GM12878 (cell line): ENCODE measurements at regions of chr4 and their contacts with region 1.

Region 1: GRCh38 chr4:122577808-122578781 is 42.8 kb downstream of the IL21 start:
- DNase-seq: no peak
- ATAC-seq: peak; percentile 97
- H3K4me3 ChIP-seq: no peak overlapping the region
- H3K27ac ChIP-seq: no peak overlapping the region
- H3K4me1 ChIP-seq: peaks cover 7% of the 10 kb centered on the region
- H3K27me3 ChIP-seq: 0 out of 4 replicates have a peak, but pooled peaks cover 0 to 2% of the 10 kb centered on the region in 2 experiments
- CTCF ChIP-seq: peak; percentile 66 to 85 (median 85)
- EP300 ChIP-seq: no peak
- POLR2A ChIP-seq: no peak
- RAD21 ChIP-seq: peak; percentile 69

Region 2: DNA sequence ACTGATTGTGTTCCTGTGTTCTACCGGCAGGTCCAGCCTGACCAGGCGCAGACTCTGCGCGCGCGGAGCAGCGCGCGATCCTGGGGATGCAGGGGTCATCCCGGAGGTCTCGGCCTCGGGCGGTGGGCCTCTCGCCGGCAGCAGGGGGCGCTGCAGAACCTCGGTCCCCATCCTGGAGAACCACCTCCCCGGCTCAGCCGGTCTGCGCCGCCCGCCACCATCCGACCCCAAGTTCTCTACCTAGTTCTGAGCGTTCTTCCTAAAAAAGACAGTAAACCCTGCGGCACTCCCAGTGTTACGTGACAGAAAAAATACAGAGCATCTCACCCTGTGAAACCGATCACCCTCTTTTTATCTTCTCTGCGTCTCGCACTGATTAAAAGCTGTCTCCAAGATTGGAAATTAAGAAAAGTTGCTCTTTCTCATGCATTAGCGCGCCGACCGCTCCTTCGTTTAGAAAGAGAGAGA is 627.8 kb before region 1 on chr4:
- CTCF ChIA-PET with region 1: interaction called, 12 read pairs
- POLR2A ChIA-PET with region 1: no interaction called
- RAD21 ChIA-PET with region 1: interaction called, 4 read pairs
- SMC1A ChIA-PET with region 1: interaction called, 4 read pairs
- in situ Hi-C with region 1: no loop called
- intact Hi-C with region 1: loop called (anchors 5 kb)
- DNase-seq: no peak
- ATAC-seq: peak; percentile 92
- H3K4me3 ChIP-seq: peak overlapping the region; percentile 63
- H3K27ac ChIP-seq: no peak overlapping the region
- H3K4me1 ChIP-seq: peaks cover 4% of the 10 kb centered on the region
- H3K27me3 ChIP-seq: peaks cover 2 to 22% of the 10 kb centered on the region in 2 experiments
- CTCF ChIP-seq: peak; percentile 47 to 71 (median 67)
- EP300 ChIP-seq: no peak
- POLR2A ChIP-seq: no peak
- RAD21 ChIP-seq: peak; percentile 56

Region 3: DNA sequence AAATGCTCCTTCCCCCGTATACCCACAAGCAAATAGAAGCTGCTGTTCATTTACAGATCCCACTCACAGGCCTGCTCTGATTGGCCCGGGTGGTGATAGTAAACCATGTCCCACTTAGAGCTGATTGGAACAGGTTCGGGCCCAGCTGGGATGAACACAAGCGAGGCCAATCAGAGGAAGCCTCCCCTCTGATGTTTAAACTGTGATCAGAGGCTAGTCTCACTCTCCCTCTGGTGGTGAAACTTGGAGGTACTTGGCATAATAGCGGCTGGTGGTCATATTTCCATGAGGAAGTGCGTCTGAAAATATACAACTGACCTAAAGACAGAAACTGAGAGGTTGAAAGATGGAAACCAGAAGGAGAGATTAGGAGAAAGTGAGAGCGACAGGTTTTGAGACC is 574.8 kb before region 1 on chr4:
- CTCF ChIA-PET with region 1: interaction called, 4 read pairs
- POLR2A ChIA-PET with region 1: no interaction called
- RAD21 ChIA-PET with region 1: no interaction called
- SMC1A ChIA-PET with region 1: no interaction called
- in situ Hi-C with region 1: no loop called
- intact Hi-C with region 1: loop called (anchors 5 kb)
- DNase-seq: peak; percentile 11
- ATAC-seq: peak; percentile 97
- H3K4me3 ChIP-seq: no peak overlapping the region
- H3K27ac ChIP-seq: no peak overlapping the region
- H3K4me1 ChIP-seq: no peaks in the 10 kb centered on the region
- H3K27me3 ChIP-seq: no peaks in the 10 kb centered on the region
- CTCF ChIP-seq: peak; percentile 58 to 66 (median 58)
- EP300 ChIP-seq: no peak
- POLR2A ChIP-seq: no peak
- RAD21 ChIP-seq: peak; percentile 81

Region 4: GRCh38 chr4:122309988-122310626 is 268.0 kb before region 1 on chr4:
- CTCF ChIA-PET with region 1: interaction called, 10 read pairs
- POLR2A ChIA-PET with region 1: no interaction called
- RAD21 ChIA-PET with region 1: interaction called, 3 read pairs
- SMC1A ChIA-PET with region 1: interaction called, 8 read pairs
- in situ Hi-C with region 1: loop called (anchors 10 kb)
- intact Hi-C with region 1: loop called (anchors 1 kb)
- DNase-seq: no peak
- ATAC-seq: no peak
- H3K4me3 ChIP-seq: no peak overlapping the region
- H3K27ac ChIP-seq: no peak overlapping the region
- H3K4me1 ChIP-seq: no peaks in the 10 kb centered on the region
- H3K27me3 ChIP-seq: no peaks in the 10 kb centered on the region
- CTCF ChIP-seq: peak in 2 of 3 experiments; percentile 16 to 34; a peak in 4 of 6 replicates
- EP300 ChIP-seq: no peak
- POLR2A ChIP-seq: no peak
- RAD21 ChIP-seq: peak; percentile 31; the same call in 1 of the 2 replicates

Region 5: GRCh38 chr4:122412547-122412946 is 165.5 kb before region 1 on chr4:
- CTCF ChIA-PET with region 1: interaction called, 3 read pairs
- POLR2A ChIA-PET with region 1: no interaction called
- RAD21 ChIA-PET with region 1: no interaction called
- SMC1A ChIA-PET with region 1: no interaction called
- in situ Hi-C with region 1: no loop called
- intact Hi-C with region 1: loop called (anchors 10 kb)
- DNase-seq: no peak
- ATAC-seq: peak; percentile 45; the same call in 2 of the 3 replicates
- H3K4me3 ChIP-seq: no peak overlapping the region
- H3K27ac ChIP-seq: no peak overlapping the region
- H3K4me1 ChIP-seq: no peaks in the 10 kb centered on the region
- H3K27me3 ChIP-seq: no peaks in the 10 kb centered on the region
- CTCF ChIP-seq: no peak
- EP300 ChIP-seq: no peak
- POLR2A ChIP-seq: no peak
- RAD21 ChIP-seq: no peak

Region 6: DNA sequence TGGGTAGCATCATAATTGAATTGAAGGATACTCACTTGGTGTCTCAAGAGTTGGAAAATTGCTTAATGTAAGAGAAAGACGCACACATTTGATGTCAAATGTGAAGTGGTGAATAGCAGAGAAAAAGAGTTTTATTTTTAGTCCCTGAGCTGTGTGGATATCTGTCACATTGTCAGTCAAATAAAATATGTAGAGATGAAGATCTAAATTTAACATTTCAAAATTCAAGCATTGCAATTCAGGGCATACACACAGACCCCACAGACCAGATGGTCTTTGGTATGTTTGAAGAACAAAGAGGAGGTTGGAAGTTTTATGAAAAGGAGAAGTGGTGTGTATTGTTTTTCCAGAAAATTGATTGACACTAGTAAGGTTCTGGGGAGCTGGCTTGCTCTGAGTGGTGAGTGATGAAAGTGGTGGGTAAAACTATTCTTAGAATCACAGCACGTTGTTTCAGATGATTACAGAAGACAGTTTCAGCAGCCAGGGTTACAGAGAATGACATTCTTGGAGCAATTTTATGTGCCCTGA is 109.5 kb after region 1 on chr4:
- CTCF ChIA-PET with region 1: no interaction called
- POLR2A ChIA-PET with region 1: no interaction called
- RAD21 ChIA-PET with region 1: no interaction called
- SMC1A ChIA-PET with region 1: no interaction called
- in situ Hi-C with region 1: no loop called
- intact Hi-C with region 1: no loop called
- DNase-seq: no peak
- ATAC-seq: peak; percentile 62
- H3K4me3 ChIP-seq: 0 out of 2 replicates have a peak overlapping the region, but pooled peaks have one; percentile 23
- H3K27ac ChIP-seq: peak overlapping the region; percentile 50
- H3K4me1 ChIP-seq: peaks cover 30% of the 10 kb centered on the region
- H3K27me3 ChIP-seq: no peaks in the 10 kb centered on the region
- CTCF ChIP-seq: no peak
- EP300 ChIP-seq: no peak
- POLR2A ChIP-seq: no peak
- RAD21 ChIP-seq: no peak